GM10248 (cell line): ENCODE measurements at regions of chr11 and their contacts with region 1.

Region 1: DNA sequence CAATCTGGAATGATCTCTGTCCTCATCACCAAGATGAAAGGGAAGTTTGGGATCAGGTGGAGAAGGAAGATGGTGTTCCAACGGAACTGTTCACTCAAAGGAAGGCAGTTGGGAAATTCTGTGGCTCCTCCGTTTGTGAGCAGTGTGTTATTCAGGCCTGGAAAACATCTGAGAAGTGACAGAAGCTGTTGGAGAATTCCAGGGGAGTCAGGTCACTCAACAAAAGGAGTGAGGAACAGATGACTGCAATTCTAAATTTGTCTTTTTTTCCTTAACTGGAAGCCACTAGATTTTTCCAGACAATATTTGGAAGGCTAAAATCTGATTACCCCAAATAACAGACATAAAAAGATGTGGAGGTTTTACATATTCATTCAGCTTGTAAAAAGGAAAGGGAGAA is 107.8 kb downstream of the CD44 start:
- DNase-seq: no peak
- CTCF ChIP-seq: no peak

Region 2: GRCh38 chr11:35257281-35257680 is 10.5 kb after region 1 on chr11:
- CTCF ChIA-PET with region 1: interaction called, 18 read pairs
- POLR2A ChIA-PET with region 1: no interaction called
- DNase-seq: peak; percentile 68
- CTCF ChIP-seq: no peak

Region 3: DNA sequence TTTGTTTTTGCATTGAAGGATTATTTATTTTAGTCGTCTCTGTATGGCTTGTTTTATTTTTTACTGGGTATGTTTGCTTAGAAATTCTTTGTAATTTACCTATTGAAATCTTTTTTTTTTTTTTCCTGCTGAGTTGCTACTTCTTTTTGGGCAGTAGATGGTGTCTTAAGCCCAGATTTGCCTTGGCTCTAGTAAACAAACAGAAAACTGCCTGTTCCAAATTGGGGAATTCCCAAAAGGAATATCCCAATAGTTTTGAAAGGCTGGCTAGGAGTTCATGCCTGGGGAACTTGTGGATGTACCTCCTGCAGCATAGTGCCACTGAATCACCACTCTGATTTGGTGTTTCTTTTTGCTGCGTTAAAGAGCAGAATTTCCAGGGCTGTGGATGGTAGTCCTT is 260.9 kb after region 1 on chr11:
- CTCF ChIA-PET with region 1: no interaction called
- POLR2A ChIA-PET with region 1: no interaction called
- DNase-seq: no peak
- CTCF ChIP-seq: no peak